Heart right ventricle (tissue), 16 donors: ENCODE measurements at regions of chr12 and their contacts with region 1.

Region 1: DNA sequence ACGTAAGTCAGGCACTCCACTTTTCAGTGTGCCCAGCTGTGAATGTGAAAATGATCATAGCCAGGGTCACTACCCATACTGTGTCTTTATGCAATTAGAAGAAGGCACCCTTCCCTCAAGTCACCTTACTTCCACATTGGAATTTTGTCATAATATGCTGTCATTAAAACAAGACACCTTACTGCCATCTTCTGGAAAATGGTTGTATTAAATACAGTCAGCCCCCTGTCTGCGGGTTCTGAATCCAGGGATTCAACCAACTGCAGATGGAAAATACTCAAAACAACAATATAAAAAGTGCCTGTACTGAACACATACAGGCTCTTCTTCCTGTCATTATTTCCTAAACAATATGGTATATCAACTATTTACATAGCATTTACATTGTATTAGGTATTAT is 70.2 kb upstream of the TBX5 start:
- DNase-seq: no peak
- ATAC-seq: peak in 4 of 8 donors; percentile 35 to 65 (median 53)
- H3K4me3 ChIP-seq: no peak overlapping the region
- H3K27ac ChIP-seq: no peak overlapping the region
- H3K4me1 ChIP-seq: peaks cover 0 to 16% (median 9%) of the 10 kb centered on the region in 9 donors
- H3K27me3 ChIP-seq: peaks cover 0 to 66% (median 54%) of the 10 kb centered on the region in 7 donors
- CTCF ChIP-seq: peak in 8 of 9 donors; percentile 32 to 72 (median 58)

Region 2: GRCh38 chr12:114166362-114166761 is 309.8 kb before region 1 on chr12:
- intact Hi-C with region 1: loop called in 9 of 10 experiments (anchors 1 to 10 kb)
- DNase-seq: peak in 1 of 2 donors; percentile 45
- ATAC-seq: peak; percentile 52 to 76 (median 66)
- H3K4me3 ChIP-seq: no peak overlapping the region
- H3K27ac ChIP-seq: no peak overlapping the region
- H3K4me1 ChIP-seq: no peaks in the 10 kb centered on the region
- H3K27me3 ChIP-seq: peaks cover 0 to 13% (median 8%) of the 10 kb centered on the region in 7 donors
- CTCF ChIP-seq: peak; percentile 33 to 80 (median 67)

Region 3: DNA sequence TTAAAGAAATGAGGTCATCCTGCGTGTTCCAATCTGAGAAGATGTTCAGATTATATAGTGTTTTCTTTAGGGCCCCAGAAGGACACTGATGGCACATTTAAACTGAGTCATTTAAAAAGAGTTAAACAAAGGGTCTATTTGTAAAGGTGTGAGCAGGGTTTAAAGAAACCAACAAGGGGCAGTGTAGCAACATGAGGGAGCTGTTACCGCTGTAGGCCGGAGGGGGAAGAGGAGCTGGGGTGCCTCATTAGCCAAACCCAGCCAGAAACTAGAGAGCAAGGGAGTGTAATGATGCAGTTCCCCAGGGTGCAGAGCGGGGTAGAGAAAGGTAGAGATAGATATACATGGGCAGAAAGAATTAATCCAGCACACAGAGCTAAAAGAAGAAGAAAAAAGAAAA is 230.6 kb before region 1 on chr12:
- intact Hi-C with region 1: loop called in 2 of 10 experiments (anchors 5 to 10 kb)
- DNase-seq: no peak
- ATAC-seq: peak in 4 of 8 donors; percentile 35 to 78 (median 43)
- H3K4me3 ChIP-seq: no peak overlapping the region
- H3K27ac ChIP-seq: no peak overlapping the region
- H3K4me1 ChIP-seq: peaks cover 0 to 4% (median 0%) of the 10 kb centered on the region in 9 donors
- H3K27me3 ChIP-seq: peaks cover 0 to 18% (median 9%) of the 10 kb centered on the region in 7 donors
- CTCF ChIP-seq: peak in 6 of 9 donors; percentile 9 to 49 (median 36)

Region 4: GRCh38 chr12:114339626-114340025 is 136.5 kb before region 1 on chr12:
- intact Hi-C with region 1: loop called in 1 of 10 experiments (anchors 10 kb)
- DNase-seq: no peak
- ATAC-seq: no peak
- H3K4me3 ChIP-seq: no peak overlapping the region
- H3K27ac ChIP-seq: no peak overlapping the region
- H3K4me1 ChIP-seq: peaks cover 0 to 7% (median 0%) of the 10 kb centered on the region in 9 donors
- H3K27me3 ChIP-seq: peaks cover 0 to 3% (median 0%) of the 10 kb centered on the region in 7 donors
- CTCF ChIP-seq: no peak

Region 5: DNA sequence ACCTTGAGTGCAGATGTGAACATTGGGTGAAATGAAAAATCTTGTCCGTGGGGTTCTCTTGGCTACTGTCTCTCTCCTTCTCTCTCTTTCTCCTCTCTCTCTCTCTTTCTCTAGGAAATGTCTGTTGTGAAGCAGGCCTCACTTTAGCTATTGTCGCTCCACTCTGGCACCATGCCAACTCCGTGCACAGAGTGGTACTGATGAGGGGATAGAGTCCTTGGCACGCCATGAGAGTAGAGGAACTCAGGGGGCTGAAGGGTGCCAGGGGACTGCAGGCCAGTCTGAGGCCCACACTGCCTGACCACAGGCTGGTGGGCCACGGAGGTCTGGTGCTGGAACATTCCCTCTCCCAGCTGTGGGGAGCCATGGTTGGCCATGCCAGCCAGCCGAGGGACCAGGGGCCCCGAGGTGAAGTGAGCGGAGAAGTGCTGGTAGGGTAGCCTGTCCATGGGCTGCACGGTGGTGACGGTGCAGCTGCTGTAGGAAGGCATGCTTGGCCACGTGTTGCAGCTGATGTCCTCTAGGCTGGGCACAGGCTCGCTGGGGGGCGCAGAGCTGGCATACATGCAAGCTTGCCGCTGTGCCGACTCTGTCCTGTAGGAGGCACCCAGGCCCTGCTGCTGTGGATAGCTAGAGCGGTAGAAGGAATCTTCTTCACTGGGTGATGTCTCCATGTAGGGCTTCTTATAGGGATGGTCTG is 120.6 kb before region 1 on chr12:
- intact Hi-C with region 1: loop called in 4 of 10 experiments (anchors 5 to 10 kb)
- DNase-seq: peak; percentile 21 to 33
- ATAC-seq: peak; percentile 69 to 89 (median 80)
- H3K4me3 ChIP-seq: no peak overlapping the region
- H3K27ac ChIP-seq: peak overlapping the region in 1 of 10 donors; percentile 36
- H3K4me1 ChIP-seq: peaks cover 0 to 14% (median 3%) of the 10 kb centered on the region in 9 donors
- H3K27me3 ChIP-seq: no peaks in the 10 kb centered on the region
- CTCF ChIP-seq: peak in 8 of 9 donors; percentile 24 to 59 (median 44)